Caco-2 (cell line): ENCODE measurements at regions of chr10 and their contacts with region 1.

Region 1: DNA sequence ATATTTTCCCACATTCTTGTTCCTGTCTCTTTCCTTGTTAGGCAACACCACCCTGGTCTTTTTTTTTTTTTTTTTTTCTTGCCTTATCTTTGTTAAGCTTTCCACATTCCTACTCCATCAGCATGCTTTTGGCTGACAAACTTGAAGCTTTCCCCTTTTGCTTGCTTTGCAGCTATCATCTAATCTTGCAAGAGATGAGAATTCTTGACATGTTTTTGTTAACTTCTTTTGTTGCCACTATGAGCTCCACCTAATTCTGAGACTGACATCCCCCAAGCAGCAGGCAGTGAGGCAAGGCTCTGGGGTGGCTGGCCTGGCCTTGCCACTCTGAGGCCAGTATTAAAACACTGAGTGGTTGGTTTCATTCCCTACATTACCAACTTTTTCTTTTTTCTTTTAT is 52.5 kb upstream of the NRP1 start:
- DNase-seq: peak; percentile 78 to 80
- H3K4me3 ChIP-seq: no peak overlapping the region
- H3K4me3 Mint-ChIP-seq: peak overlapping the region; percentile 34
- H3K27ac Mint-ChIP-seq: peak overlapping the region; percentile 93
- H3K4me1 ChIP-seq: peaks cover 58% of the 10 kb centered on the region
- H3K4me1 Mint-ChIP-seq: peaks cover 36% of the 10 kb centered on the region
- H3K27me3 ChIP-seq: no peaks in the 10 kb centered on the region
- H3K27me3 Mint-ChIP-seq: no peaks in the 10 kb centered on the region
- CTCF ChIP-seq: no peak

Region 2: DNA sequence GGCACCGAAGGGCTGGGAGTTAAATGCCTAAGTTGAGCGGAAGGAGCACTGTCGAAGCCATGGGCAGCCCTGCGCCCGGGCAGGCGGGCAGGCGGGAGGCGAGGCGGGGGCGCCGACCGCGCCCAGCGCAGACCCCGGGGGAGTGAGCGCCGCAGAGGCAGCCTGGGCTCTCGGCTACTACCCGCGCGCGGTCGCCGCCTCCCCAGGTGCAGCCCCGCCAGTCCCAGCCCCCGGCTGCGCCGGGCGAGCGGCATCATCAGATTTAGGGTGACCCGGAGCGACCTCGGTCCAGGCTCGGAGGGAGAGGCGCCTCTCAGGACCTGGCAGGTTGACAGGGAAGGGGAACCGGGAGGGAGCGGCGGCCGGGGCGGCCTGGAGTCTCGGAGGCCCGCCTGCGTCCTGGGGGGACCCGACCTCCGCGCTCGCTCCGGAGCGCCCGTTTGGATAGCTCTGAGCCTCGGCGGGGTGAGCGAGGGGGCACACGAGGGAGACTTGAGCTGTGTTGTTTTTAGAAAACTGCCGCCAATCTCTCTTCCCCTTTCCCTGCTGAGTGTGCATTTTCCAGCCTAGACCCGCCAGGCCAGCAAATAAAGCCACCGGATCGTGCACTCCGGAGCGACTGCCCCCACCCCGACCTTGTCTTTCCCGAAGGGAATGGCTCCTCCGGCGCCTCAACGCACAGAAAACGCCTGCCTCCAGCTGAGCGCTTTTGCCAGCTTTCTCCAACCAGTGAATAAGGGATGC is 50.2 kb before region 1 on chr10:
- CTCF ChIA-PET with region 1: interaction called, 9 read pairs
- POLR2A ChIA-PET with region 1: interaction called, 3 read pairs
- intact Hi-C with region 1: loop called (anchors 1 kb)
- DNase-seq: peak; percentile 54 to 59
- H3K4me3 ChIP-seq: peak overlapping the region; percentile 58
- H3K4me3 Mint-ChIP-seq: peak overlapping the region; percentile 84
- H3K27ac Mint-ChIP-seq: peak overlapping the region; percentile 76
- H3K4me1 ChIP-seq: peaks cover 11% of the 10 kb centered on the region
- H3K4me1 Mint-ChIP-seq: peaks cover 29% of the 10 kb centered on the region
- H3K27me3 ChIP-seq: no peaks in the 10 kb centered on the region
- H3K27me3 Mint-ChIP-seq: no peaks in the 10 kb centered on the region
- CTCF ChIP-seq: no peak